IMR-90 (cell line): ENCODE measurements at regions of chr10 and their contacts with region 1.

Region 1: DNA sequence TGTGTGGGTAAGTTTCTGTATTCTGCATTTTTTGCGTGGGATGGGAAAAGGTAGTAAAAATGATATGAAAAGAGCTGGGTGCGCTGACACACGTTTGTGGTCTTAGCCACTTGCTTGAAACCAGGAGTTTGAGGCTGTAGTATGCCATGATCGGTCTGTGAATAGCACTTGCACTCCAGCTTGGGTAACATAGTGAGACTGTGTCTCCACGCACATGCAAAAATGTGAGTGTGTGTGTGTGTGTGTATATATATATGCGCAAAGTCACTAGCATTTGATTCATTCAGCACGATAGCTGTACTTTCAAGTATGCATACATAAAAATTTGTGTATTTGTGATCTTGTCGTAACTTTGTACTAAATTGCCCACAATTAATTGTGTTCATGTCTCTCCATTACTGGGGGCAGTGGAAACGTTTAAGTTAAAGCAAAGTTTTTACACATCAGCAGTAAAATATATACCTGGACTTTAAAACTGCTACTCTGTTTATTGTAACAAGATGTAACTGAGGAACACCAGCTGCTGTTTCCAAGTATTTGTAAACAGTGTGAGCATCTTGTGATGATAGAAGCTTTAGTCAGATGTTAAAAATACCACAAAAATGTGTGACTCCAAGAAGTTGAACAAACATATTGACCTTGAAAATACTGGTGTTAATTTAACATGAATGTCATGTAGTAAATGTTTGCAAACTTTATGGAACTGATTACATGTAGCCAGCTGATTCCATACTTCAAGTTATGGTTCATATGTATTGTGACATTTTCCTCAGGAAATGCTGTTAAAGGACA is 1.6 kb downstream of the ZRANB1 start:
- DNase-seq: peak; percentile 95
- ATAC-seq: peak; percentile 66
- H3K4me3 ChIP-seq: no peak overlapping the region
- H3K27ac ChIP-seq: peak overlapping the region; percentile 92
- H3K4me1 ChIP-seq: peaks cover 17% of the 10 kb centered on the region
- H3K27me3 ChIP-seq: no peaks in the 10 kb centered on the region
- CTCF ChIP-seq: no peak
- POLR2A ChIP-seq: no peak
- RAD21 ChIP-seq: no peak

Region 2: DNA sequence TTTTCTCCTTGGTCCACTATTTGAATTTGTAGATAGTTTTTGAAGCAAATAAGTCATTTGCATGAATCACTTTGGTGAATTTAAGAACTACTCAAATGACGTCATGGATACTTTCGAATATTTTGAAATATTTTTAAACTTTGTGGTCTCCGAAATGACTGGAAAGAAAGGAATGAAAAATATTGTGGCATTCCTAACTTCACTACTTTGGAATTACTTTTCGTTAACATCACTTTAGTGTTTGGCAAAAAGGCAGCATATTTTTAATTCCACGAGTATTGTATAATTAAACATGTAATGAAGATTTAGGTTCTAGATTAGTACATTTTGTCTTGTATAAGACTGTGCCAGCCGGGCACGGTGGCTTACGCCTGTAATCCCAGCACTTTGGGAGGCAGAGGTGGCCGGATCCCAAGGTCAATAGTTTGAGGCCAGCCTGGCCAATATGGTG is 36.9 kb before region 1 on chr10:
- CTCF ChIA-PET with region 1: interaction called, 3 read pairs
- POLR2A ChIA-PET with region 1: no interaction called
- dilution Hi-C with region 1: no loop called
- in situ Hi-C with region 1: no loop called
- intact Hi-C with region 1: loop called (anchors 1 kb)
- DNase-seq: peak; percentile 95
- ATAC-seq: peak; percentile 64
- H3K4me3 ChIP-seq: no peak overlapping the region
- H3K27ac ChIP-seq: peak overlapping the region; percentile 83
- H3K4me1 ChIP-seq: peaks cover 19% of the 10 kb centered on the region
- H3K27me3 ChIP-seq: no peaks in the 10 kb centered on the region
- CTCF ChIP-seq: no peak
- POLR2A ChIP-seq: no peak
- RAD21 ChIP-seq: no peak

Region 3: DNA sequence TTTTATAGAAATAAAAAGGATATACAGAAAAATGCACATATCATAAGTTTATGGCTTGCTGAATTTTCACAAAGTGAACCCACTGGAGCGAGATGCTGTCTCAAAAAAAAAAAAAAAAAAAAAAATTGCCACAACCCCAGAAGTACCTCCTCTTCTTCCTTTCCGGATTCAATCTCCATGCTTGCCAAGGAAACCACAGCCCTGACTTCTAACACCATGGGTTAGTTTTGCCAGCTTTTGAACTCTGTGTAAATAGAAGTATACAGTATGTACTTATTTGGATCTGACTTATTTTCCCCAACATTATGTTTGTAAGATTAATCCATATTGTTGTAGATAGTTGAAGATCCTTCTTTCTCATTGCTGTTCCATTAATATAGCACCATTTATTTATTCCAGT is 992.8 kb after region 1 on chr10:
- CTCF ChIA-PET with region 1: no interaction called
- POLR2A ChIA-PET with region 1: no interaction called
- dilution Hi-C with region 1: no loop called
- in situ Hi-C with region 1: no loop called
- intact Hi-C with region 1: no loop called
- DNase-seq: no peak
- ATAC-seq: no peak
- H3K4me3 ChIP-seq: no peak overlapping the region
- H3K27ac ChIP-seq: no peak overlapping the region
- H3K4me1 ChIP-seq: no peaks in the 10 kb centered on the region
- H3K27me3 ChIP-seq: no peaks in the 10 kb centered on the region; the same call in 1 of the 2 replicates
- CTCF ChIP-seq: no peak
- POLR2A ChIP-seq: no peak
- RAD21 ChIP-seq: no peak